Activated CD4-positive, alpha-beta memory T cell treated with anti-CD3 and anti-CD28 coated beads for 36 hours (primary cell): ENCODE measurements at regions of chr20 and their contacts with region 1.

Region 1: GRCh38 chr20:51480507-51481270 is 61.8 kb downstream of the NFATC2 start:
- DNase-seq: peak; percentile 89
- H3K4me3 Mint-ChIP-seq: peak overlapping the region; percentile 61
- H3K27ac Mint-ChIP-seq: peak overlapping the region; percentile 97
- H3K4me1 Mint-ChIP-seq: peaks cover 88% of the 10 kb centered on the region
- H3K27me3 Mint-ChIP-seq: no peaks in the 10 kb centered on the region

Region 2: GRCh38 chr20:51042654-51043247 is 437.9 kb before region 1 on chr20:
- CTCF ChIA-PET with region 1: no interaction called
- POLR2A ChIA-PET with region 1: no interaction called
- intact Hi-C with region 1: no loop called
- DNase-seq: no peak
- H3K4me3 Mint-ChIP-seq: no peak overlapping the region
- H3K27ac Mint-ChIP-seq: no peak overlapping the region
- H3K4me1 Mint-ChIP-seq: no peaks in the 10 kb centered on the region
- H3K27me3 Mint-ChIP-seq: peaks cover 11% of the 10 kb centered on the region

Region 3: GRCh38 chr20:51169813-51170212 is 310.9 kb before region 1 on chr20:
- CTCF ChIA-PET with region 1: no interaction called
- POLR2A ChIA-PET with region 1: no interaction called
- intact Hi-C with region 1: no loop called
- DNase-seq: no peak
- H3K4me3 Mint-ChIP-seq: no peak overlapping the region
- H3K27ac Mint-ChIP-seq: no peak overlapping the region
- H3K4me1 Mint-ChIP-seq: no peaks in the 10 kb centered on the region
- H3K27me3 Mint-ChIP-seq: peaks cover 35% of the 10 kb centered on the region

Region 4: GRCh38 chr20:51404298-51405060 is 76.2 kb before region 1 on chr20:
- CTCF ChIA-PET with region 1: interaction called, 5 read pairs
- POLR2A ChIA-PET with region 1: interaction called, 15 read pairs
- intact Hi-C with region 1: loop called (anchors 1 kb)
- DNase-seq: peak; percentile 97
- H3K4me3 Mint-ChIP-seq: peak overlapping the region; percentile 17
- H3K27ac Mint-ChIP-seq: peak overlapping the region; percentile 99
- H3K4me1 Mint-ChIP-seq: peaks cover 93% of the 10 kb centered on the region
- H3K27me3 Mint-ChIP-seq: no peaks in the 10 kb centered on the region

Region 5: GRCh38 chr20:51462566-51463276 is 18.0 kb before region 1 on chr20:
- CTCF ChIA-PET with region 1: no interaction called
- POLR2A ChIA-PET with region 1: no interaction called
- intact Hi-C with region 1: loop called (anchors 1 kb)
- DNase-seq: no peak
- H3K4me3 Mint-ChIP-seq: no peak overlapping the region
- H3K27ac Mint-ChIP-seq: no peak overlapping the region
- H3K4me1 Mint-ChIP-seq: peaks cover 27% of the 10 kb centered on the region
- H3K27me3 Mint-ChIP-seq: no peaks in the 10 kb centered on the region

Region 6: GRCh38 chr20:51492167-51493092 is 11.7 kb after region 1 on chr20:
- CTCF ChIA-PET with region 1: interaction called, 38 read pairs
- POLR2A ChIA-PET with region 1: interaction called, 37 read pairs
- intact Hi-C with region 1: no loop called
- DNase-seq: no peak
- H3K4me3 Mint-ChIP-seq: no peak overlapping the region
- H3K27ac Mint-ChIP-seq: no peak overlapping the region
- H3K4me1 Mint-ChIP-seq: peaks cover 95% of the 10 kb centered on the region
- H3K27me3 Mint-ChIP-seq: no peaks in the 10 kb centered on the region

Region 7: DNA sequence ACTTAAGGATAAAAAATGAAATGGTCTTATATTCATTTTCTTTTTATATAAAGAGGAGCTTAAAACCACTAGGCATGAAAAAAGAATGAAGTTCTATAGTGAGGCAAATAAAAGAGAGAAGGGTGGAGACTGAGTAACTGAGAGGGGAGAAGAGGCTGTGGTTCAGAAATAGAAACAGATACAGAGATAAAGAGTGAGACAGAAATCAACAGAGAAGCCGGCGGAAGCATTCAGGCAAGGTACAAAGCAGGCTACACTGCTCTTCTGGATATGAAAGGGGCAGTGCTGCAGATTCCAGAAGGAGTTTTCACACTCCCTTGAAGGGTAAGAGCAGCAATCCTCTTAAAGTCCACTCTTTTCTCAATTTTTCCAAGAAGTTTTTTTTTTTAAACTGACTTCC is 32.0 kb after region 1 on chr20:
- CTCF ChIA-PET with region 1: no interaction called
- POLR2A ChIA-PET with region 1: interaction called, 4 read pairs
- intact Hi-C with region 1: loop called (anchors 1 kb)
- DNase-seq: peak; percentile 47
- H3K4me3 Mint-ChIP-seq: no peak overlapping the region
- H3K27ac Mint-ChIP-seq: peak overlapping the region; percentile 44
- H3K4me1 Mint-ChIP-seq: peaks cover 79% of the 10 kb centered on the region
- H3K27me3 Mint-ChIP-seq: no peaks in the 10 kb centered on the region

Region 8: GRCh38 chr20:52083627-52084232 is 603.0 kb after region 1 on chr20:
- CTCF ChIA-PET with region 1: no interaction called
- POLR2A ChIA-PET with region 1: no interaction called
- intact Hi-C with region 1: no loop called
- DNase-seq: peak; percentile 59
- H3K4me3 Mint-ChIP-seq: no peak overlapping the region
- H3K27ac Mint-ChIP-seq: no peak overlapping the region
- H3K4me1 Mint-ChIP-seq: peaks cover 4% of the 10 kb centered on the region
- H3K27me3 Mint-ChIP-seq: no peaks in the 10 kb centered on the region